ENCODE measurements at regions of chr19 and their contacts with region 1.

Region 1: DNA sequence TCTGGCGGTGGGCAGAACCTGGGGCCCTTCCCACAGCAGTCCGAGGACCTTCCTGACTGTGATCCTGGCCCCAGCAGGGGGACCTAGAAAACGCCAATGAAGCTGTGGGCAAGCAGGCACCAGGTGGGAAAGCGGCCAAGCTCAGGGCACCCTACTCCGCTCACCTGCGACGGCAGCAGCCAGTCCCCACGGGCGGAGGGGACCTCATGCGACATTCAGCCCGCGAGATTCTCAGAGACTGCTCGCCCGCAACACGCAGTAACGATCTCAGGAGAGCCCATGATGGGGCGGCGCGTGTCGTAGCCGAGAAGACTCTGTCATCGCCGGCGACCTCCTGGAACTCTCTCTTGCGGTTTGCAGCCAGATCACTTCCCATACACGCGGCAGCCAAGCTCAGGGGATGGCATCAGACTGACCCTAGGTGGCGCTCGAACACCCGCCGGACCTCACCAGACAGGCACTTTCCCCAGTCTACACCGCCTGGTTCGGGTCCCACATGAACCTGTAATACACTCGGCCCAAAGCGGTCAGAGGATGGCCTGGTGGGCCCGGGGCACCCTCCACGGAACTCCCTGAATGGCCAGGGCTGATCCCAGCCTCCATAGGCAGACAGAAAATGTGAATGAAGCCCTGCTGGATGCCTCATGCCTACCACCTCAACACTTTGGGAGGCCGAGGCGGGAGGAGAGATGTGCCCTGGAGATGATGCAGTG is 26.5 kb downstream of the MAN2B1 start:
- DNase-seq: peak; percentile 64 to 81 (median 78)
- ATAC-seq: peak; percentile 93
- H3K4me3 ChIP-seq: peak overlapping the region; percentile 40
- H3K4me3 Mint-ChIP-seq: peak overlapping the region; percentile 73 to 85 (median 80)
- H3K27ac ChIP-seq: peak overlapping the region; percentile 5
- H3K27ac Mint-ChIP-seq: peak overlapping the region; percentile 39 to 89 (median 82)
- H3K4me1 ChIP-seq: peaks cover 3 to 12% of the 10 kb centered on the region in 2 donors
- H3K4me1 Mint-ChIP-seq: peaks cover 12 to 28% (median 21%) of the 10 kb centered on the region in 7 donors
- H3K27me3 ChIP-seq: no peaks in the 10 kb centered on the region
- H3K27me3 Mint-ChIP-seq: no peaks in the 10 kb centered on the region

Region 2: GRCh38 chr19:12411893-12412292 is 228.2 kb before region 1 on chr19:
- CTCF ChIA-PET with region 1: no interaction called
- POLR2A ChIA-PET with region 1: no interaction called
- intact Hi-C with region 1: no loop called
- DNase-seq: no peak
- ATAC-seq: no peak
- H3K4me3 ChIP-seq: no peak overlapping the region
- H3K4me3 Mint-ChIP-seq: no peak overlapping the region
- H3K27ac ChIP-seq: no peak overlapping the region
- H3K27ac Mint-ChIP-seq: no peak overlapping the region
- H3K4me1 ChIP-seq: no peaks in the 10 kb centered on the region
- H3K4me1 Mint-ChIP-seq: no peaks in the 10 kb centered on the region
- H3K27me3 ChIP-seq: no peaks in the 10 kb centered on the region
- H3K27me3 Mint-ChIP-seq: no peaks in the 10 kb centered on the region

Region 3: DNA sequence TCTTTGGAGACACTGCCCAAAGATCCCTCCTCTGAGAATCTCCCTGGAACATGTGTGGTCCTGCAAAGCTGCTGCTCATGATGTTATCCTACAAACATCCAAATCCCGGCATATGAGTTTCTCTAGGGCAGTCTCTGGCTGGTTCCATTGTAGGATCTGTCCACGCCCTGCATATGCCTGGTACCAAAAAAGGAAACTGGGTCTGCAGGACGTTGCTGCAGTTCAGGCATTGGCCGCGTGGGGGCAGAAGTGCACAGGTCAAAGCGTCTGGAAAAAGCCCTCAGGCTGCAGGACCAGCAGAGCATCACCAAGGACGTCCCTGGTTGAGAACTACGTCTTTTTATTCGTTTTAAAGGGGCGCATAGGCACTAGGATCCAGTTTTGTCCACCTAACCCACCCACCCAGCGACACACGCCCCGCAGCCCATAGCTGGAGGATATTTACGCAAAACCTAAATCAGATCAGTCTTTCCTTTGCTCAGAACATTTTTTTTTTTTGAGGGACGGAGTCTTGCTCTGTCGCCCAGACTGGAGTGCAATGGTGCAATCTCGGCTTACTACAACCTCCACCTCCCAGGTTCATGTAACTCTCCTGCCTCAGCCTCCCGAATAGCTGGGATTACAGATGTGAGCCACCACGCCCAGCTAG is 75.9 kb before region 1 on chr19:
- CTCF ChIA-PET with region 1: no interaction called
- POLR2A ChIA-PET with region 1: no interaction called
- intact Hi-C with region 1: loop called (anchors 1 kb)
- DNase-seq: peak; percentile 79 to 96 (median 88)
- ATAC-seq: peak; percentile 100
- H3K4me3 ChIP-seq: no peak overlapping the region
- H3K4me3 Mint-ChIP-seq: peak overlapping the region in 1 of 10 donors; percentile 33
- H3K27ac ChIP-seq: no peak overlapping the region
- H3K27ac Mint-ChIP-seq: peak overlapping the region in 2 of 9 donors; percentile 3 to 51
- H3K4me1 ChIP-seq: no peaks in the 10 kb centered on the region
- H3K4me1 Mint-ChIP-seq: peaks cover 0 to 6% (median 5%) of the 10 kb centered on the region in 7 donors
- H3K27me3 ChIP-seq: no peaks in the 10 kb centered on the region
- H3K27me3 Mint-ChIP-seq: no peaks in the 10 kb centered on the region

Region 4: DNA sequence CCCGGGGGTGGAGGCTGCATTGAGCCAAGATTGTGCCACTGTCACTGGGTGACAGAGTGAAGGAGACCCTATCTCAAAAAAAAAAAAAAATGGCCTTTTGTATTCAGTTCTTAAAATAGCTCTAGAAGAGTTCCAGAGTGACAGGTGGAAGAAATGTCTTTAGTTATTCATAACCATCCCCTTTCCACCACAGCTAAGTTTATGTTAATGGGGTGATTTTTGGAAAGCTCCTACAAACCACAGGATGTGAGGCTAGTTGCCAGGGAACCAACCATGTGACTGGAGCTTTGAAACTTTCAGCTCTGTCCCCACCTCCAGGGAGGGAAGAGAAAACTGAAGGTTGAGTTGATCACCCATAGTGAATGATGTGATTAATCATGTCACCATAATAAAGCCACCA is 36.3 kb before region 1 on chr19:
- CTCF ChIA-PET with region 1: interaction called, 6 read pairs
- POLR2A ChIA-PET with region 1: interaction called, 4 read pairs
- intact Hi-C with region 1: loop called in 1 of 2 experiments (anchors 2 kb)
- DNase-seq: peak in 8 of 9 donors; percentile 45 to 68 (median 61)
- ATAC-seq: peak; percentile 88
- H3K4me3 ChIP-seq: no peak overlapping the region
- H3K4me3 Mint-ChIP-seq: peak overlapping the region in 7 of 10 donors; percentile 5 to 60 (median 32)
- H3K27ac ChIP-seq: no peak overlapping the region
- H3K27ac Mint-ChIP-seq: peak overlapping the region in 7 of 9 donors; percentile 14 to 82 (median 68)
- H3K4me1 ChIP-seq: peaks cover 4 to 15% of the 10 kb centered on the region in 2 donors
- H3K4me1 Mint-ChIP-seq: peaks cover 0 to 17% (median 11%) of the 10 kb centered on the region in 7 donors
- H3K27me3 ChIP-seq: no peaks in the 10 kb centered on the region
- H3K27me3 Mint-ChIP-seq: no peaks in the 10 kb centered on the region

Region 5: DNA sequence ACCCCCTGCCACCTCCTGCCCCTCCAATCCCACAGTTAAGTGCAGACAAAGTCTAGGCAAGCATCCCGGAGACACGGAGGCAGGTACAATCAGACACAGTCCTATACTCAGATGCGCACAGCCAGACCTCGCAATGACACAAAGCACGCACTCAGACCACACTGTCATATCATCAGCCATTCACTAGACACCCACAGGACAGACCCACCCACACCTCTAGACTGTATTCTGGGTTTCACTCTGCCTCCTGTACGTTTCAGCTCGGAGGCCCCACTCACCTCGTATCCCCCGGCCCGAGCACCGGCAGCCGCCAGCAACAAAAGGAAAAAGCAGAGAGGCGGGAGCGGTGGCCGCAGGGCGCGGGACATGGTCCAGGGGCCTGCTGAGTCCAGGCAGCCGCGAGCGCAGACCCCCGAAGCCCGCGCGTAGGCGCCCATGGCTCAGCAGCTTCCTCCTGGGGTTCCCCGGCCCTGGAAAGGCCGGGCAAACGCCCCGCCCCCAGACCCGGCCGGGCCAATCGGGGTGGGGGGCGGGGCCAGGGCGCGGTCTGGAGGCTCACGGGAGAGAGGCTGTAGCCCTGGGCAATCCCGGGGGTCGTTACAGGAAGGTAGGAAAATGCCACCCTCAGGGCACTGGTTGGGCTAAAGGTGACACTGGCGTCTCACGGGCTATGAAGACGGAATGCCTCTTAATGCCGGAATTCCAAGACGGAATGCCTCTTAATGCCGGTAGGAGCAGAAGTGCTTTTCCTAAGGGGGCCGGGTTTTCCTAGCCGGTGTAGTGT is 26.4 kb after region 1 on chr19 and contains the starts of genes MAN2B1 and WDR83:
- CTCF ChIA-PET with region 1: interaction called, 5 read pairs
- POLR2A ChIA-PET with region 1: interaction called, 4 read pairs
- intact Hi-C with region 1: loop called in 1 of 2 experiments (anchors 1 kb)
- DNase-seq: peak; percentile 56 to 86 (median 72)
- ATAC-seq: peak; percentile 82
- H3K4me3 ChIP-seq: peak within 1 kb of the TSS; percentile 92
- H3K4me3 Mint-ChIP-seq: peak within 1 kb of the TSS; percentile 90 to 100 (median 98)
- H3K27ac ChIP-seq: peak within 1 kb of the TSS; percentile 99
- H3K27ac Mint-ChIP-seq: peak within 1 kb of the TSS; percentile 77 to 100 (median 91)
- H3K4me1 ChIP-seq: peaks cover 38% of the 10 kb centered on the region in 2 donors
- H3K4me1 Mint-ChIP-seq: peaks cover 22 to 69% (median 45%) of the 10 kb centered on the region in 7 donors
- H3K27me3 ChIP-seq: no peaks in the 10 kb centered on the region
- H3K27me3 Mint-ChIP-seq: no peaks in the 10 kb centered on the region
- total RNA-seq, gene MAN2B1: 105 to 215 (median 138) TPM
- total RNA-seq, gene WDR83: 7.8 to 18.6 (median 14.7) TPM

Region 6: DNA sequence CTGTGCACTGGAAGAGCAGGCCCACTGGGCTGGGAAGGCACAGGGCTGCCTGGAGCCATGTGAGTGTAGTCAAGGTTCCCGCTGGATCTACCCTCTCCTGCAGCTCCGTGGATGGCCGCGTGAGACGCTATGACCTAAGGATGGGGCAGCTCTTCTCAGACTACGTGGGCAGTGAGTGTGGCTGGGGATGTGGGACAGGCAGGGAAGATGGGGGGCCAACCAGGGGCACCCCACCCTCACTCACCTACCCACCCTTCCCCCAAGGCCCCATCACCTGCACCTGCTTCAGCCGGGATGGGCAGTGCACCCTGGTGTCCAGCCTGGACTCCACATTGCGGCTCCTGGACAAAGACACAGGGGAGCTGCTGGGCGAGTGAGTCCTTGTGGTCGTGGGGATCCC is 32.7 kb after region 1 on chr19:
- CTCF ChIA-PET with region 1: interaction called, 5 read pairs
- POLR2A ChIA-PET with region 1: interaction called, 4 read pairs
- intact Hi-C with region 1: loop called in 1 of 2 experiments (anchors 1 kb)
- DNase-seq: no peak
- ATAC-seq: no peak
- H3K4me3 ChIP-seq: no peak overlapping the region
- H3K4me3 Mint-ChIP-seq: no peak overlapping the region
- H3K27ac ChIP-seq: no peak overlapping the region
- H3K27ac Mint-ChIP-seq: no peak overlapping the region
- H3K4me1 ChIP-seq: peaks cover 16 to 25% of the 10 kb centered on the region in 2 donors
- H3K4me1 Mint-ChIP-seq: peaks cover 28 to 48% (median 36%) of the 10 kb centered on the region in 7 donors
- H3K27me3 ChIP-seq: no peaks in the 10 kb centered on the region
- H3K27me3 Mint-ChIP-seq: no peaks in the 10 kb centered on the region

Region 7: GRCh38 chr19:12838182-12838885 is 198.3 kb after region 1 on chr19 and contains the start of gene MAST1:
- CTCF ChIA-PET with region 1: no interaction called
- POLR2A ChIA-PET with region 1: no interaction called
- intact Hi-C with region 1: no loop called
- DNase-seq: peak in 7 of 9 donors; percentile 37 to 78 (median 52)
- ATAC-seq: peak; percentile 84
- H3K4me3 ChIP-seq: no peak within 1 kb of the TSS
- H3K4me3 Mint-ChIP-seq: peak within 1 kb of the TSS; percentile 58 to 79 (median 72)
- H3K27ac ChIP-seq: no peak within 1 kb of the TSS
- H3K27ac Mint-ChIP-seq: peak within 1 kb of the TSS in 3 of 9 donors; percentile 12 to 30 (median 24)
- H3K4me1 ChIP-seq: peaks cover 8 to 11% of the 10 kb centered on the region in 2 donors
- H3K4me1 Mint-ChIP-seq: peaks cover 0 to 46% (median 29%) of the 10 kb centered on the region in 7 donors
- H3K27me3 ChIP-seq: peaks cover 16 to 33% of the 10 kb centered on the region in 2 donors
- H3K27me3 Mint-ChIP-seq: peaks cover 69 to 74% (median 73%) of the 10 kb centered on the region in 5 donors
- total RNA-seq, gene MAST1: 0.51 to 0.93 (median 0.71) TPM in 4 of 5 experiments, not detected in the other

Region 8: GRCh38 chr19:12896460-12896859 is 256.4 kb after region 1 on chr19:
- CTCF ChIA-PET with region 1: no interaction called
- POLR2A ChIA-PET with region 1: no interaction called
- intact Hi-C with region 1: no loop called
- DNase-seq: no peak
- ATAC-seq: no peak
- H3K4me3 ChIP-seq: no peak overlapping the region
- H3K4me3 Mint-ChIP-seq: no peak overlapping the region
- H3K27ac ChIP-seq: no peak overlapping the region
- H3K27ac Mint-ChIP-seq: no peak overlapping the region
- H3K4me1 ChIP-seq: peaks cover 5 to 9% of the 10 kb centered on the region in 2 donors
- H3K4me1 Mint-ChIP-seq: peaks cover 6 to 15% (median 12%) of the 10 kb centered on the region in 7 donors
- H3K27me3 ChIP-seq: no peaks in the 10 kb centered on the region
- H3K27me3 Mint-ChIP-seq: no peaks in the 10 kb centered on the region